Endothelial cell of umbilical vein (primary cell): ENCODE measurements at regions of chr12 and their contacts with region 1.

Region 1: DNA sequence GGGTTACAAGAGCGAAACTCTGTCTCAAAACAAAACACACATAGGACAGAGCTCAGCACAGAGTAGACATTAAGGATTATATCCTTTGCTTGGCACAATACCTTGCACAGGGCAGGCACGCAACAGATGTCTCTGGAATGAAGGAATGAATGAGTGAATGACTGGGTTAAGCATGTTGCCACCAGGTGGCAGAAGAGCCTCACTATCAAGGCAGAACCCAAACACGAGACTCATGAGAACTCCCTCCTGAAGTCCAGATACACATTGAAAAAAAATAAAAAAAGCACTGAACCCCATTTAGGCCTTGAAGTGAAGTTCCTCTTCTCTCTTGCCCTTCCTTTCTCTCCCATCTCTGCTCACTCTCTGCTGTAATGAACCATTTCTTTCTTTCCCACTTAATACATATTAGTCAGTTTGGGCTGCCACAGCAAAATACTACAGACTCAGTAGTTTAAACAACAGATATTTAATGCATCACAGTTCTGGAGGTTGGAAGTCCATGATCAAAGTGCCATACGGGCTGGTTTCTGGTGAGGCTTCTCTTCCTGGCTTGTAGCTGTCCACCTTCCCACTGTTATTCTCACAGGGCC is 26.6 kb upstream of the LTA4H start:
- DNase-seq: peak; percentile 90
- H3K4me3 ChIP-seq: no peak overlapping the region
- H3K27ac ChIP-seq: no peak overlapping the region
- H3K4me1 ChIP-seq: peaks cover 3% of the 10 kb centered on the region
- H3K27me3 ChIP-seq: no peaks in the 10 kb centered on the region
- CTCF ChIP-seq: peak; percentile 77 to 80
- POLR2A ChIP-seq: no peak

Region 2: GRCh38 chr12:95986635-95987570 is 75.1 kb before region 1 on chr12:
- CTCF ChIA-PET with region 1: no interaction called
- POLR2A ChIA-PET with region 1: no interaction called
- dilution Hi-C with region 1: no loop called
- intact Hi-C with region 1: no loop called
- DNase-seq: no peak
- H3K4me3 ChIP-seq: no peak overlapping the region
- H3K27ac ChIP-seq: no peak overlapping the region
- H3K4me1 ChIP-seq: no peaks in the 10 kb centered on the region
- H3K27me3 ChIP-seq: peaks cover 14 to 26% of the 10 kb centered on the region in 2 experiments
- CTCF ChIP-seq: no peak
- POLR2A ChIP-seq: no peak

Region 3: GRCh38 chr12:96164951-96165811 is 103.2 kb after region 1 on chr12:
- CTCF ChIA-PET with region 1: no interaction called
- POLR2A ChIA-PET with region 1: no interaction called
- dilution Hi-C with region 1: no loop called
- intact Hi-C with region 1: loop called (anchors 1 kb)
- DNase-seq: peak; percentile 98
- H3K4me3 ChIP-seq: no peak overlapping the region
- H3K27ac ChIP-seq: peak overlapping the region; percentile 81
- H3K4me1 ChIP-seq: peaks cover 45% of the 10 kb centered on the region
- H3K27me3 ChIP-seq: no peaks in the 10 kb centered on the region
- CTCF ChIP-seq: no peak
- POLR2A ChIP-seq: peak; percentile 50

Region 4: DNA sequence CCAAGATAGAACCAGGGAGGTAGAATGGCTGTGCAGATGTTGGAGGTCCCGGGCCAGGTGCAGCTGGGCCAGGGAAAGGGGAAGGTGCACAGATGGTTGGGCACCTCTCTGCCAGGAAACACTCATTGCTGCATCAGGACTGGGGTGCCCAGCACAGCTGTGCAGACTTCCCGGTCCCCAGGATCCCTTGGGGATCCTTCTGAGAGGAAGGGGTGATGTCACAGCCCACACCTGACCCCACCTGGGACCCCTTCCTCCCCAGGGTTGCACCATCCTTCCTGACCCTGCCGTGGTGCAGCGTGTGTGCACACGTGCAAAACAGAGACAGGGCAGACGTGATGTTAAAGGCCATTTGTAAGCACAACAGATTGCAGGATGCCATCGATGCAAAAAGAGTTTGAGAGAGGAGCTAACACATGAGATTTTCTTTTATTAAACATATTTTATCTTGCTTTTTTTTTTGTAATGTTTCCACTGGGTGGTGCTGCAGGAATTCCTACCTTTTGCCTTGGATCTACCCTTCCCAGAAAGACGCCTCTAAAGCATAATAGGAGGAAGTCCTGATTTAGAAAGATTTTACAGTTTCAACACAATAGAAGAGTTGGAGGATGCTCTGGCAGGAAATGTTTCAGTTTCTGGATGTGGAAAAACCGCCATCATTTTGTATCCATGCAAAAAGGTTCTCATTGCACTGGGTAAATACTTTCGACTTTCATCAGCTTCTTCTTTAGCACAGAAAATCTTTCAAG is 147.0 kb after region 1 on chr12:
- CTCF ChIA-PET with region 1: interaction called, 12 read pairs
- POLR2A ChIA-PET with region 1: no interaction called
- dilution Hi-C with region 1: no loop called
- intact Hi-C with region 1: no loop called
- DNase-seq: peak; percentile 91
- H3K4me3 ChIP-seq: no peak overlapping the region
- H3K27ac ChIP-seq: peak overlapping the region; percentile 82
- H3K4me1 ChIP-seq: peaks cover 100% of the 10 kb centered on the region
- H3K27me3 ChIP-seq: no peaks in the 10 kb centered on the region
- CTCF ChIP-seq: peak in 1 of 2 donors; percentile 18
- POLR2A ChIP-seq: no peak

Region 5: DNA sequence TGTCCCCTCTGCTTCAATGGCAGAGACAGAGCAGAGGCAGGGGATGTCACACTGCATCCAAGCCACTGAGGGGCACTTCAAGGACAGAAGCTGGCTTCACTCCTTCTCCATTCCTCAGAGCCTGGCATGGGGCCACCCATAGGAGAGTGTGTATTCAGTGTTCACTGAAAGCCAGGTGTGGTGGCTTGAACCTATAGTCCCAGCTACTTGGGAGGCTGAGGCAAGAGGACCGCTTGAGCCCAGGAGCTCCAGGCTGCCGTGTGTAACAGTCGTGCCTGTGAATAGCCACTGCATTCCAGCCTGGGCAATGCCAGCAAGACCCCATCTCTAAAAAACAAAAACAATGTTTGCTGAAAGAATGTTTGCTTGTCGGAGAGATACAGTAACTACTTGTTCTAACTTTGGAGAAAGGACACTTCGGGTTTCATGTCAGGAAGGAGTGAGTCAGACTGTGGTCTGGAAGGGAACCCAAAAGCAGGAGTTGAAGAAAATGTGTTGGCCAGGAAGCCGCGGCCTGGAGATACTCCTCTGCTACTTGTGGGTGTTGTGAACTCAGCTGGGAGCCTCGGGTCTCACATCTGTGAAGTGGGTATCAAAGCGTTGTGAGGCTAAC is 175.6 kb after region 1 on chr12:
- CTCF ChIA-PET with region 1: no interaction called
- POLR2A ChIA-PET with region 1: no interaction called
- dilution Hi-C with region 1: no loop called
- intact Hi-C with region 1: loop called (anchors 2 kb)
- DNase-seq: peak; percentile 96
- H3K4me3 ChIP-seq: no peak overlapping the region
- H3K27ac ChIP-seq: peak overlapping the region; percentile 86
- H3K4me1 ChIP-seq: peaks cover 94% of the 10 kb centered on the region
- H3K27me3 ChIP-seq: no peaks in the 10 kb centered on the region
- CTCF ChIP-seq: no peak
- POLR2A ChIP-seq: no peak

Region 6: DNA sequence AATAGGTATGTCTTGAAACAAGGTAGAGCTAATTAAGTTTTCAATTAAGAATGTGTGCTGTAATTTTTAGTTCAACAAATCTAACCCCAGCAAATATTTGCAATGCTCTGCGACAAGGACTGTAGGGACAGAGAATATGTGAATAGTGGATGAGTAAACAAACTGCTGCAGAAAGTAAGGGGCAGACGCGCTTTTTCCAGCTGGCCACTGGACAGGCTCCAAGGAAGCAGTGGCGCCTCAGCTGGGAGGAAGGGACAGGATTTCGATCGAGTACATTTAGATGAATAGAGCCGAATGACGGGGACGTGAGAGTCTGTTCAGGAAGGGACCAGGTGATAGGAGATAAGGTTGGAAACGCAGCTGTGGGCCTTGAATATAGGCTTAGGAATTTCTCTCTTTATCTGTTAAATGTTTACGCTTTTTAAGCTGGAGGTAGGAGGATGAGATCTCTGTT is 201.5 kb after region 1 on chr12:
- CTCF ChIA-PET with region 1: no interaction called
- POLR2A ChIA-PET with region 1: no interaction called
- dilution Hi-C with region 1: no loop called
- intact Hi-C with region 1: loop called (anchors 2 kb)
- DNase-seq: peak; percentile 88
- H3K4me3 ChIP-seq: no peak overlapping the region
- H3K27ac ChIP-seq: peak overlapping the region; percentile 60
- H3K4me1 ChIP-seq: peaks cover 49% of the 10 kb centered on the region
- H3K27me3 ChIP-seq: no peaks in the 10 kb centered on the region
- CTCF ChIP-seq: no peak
- POLR2A ChIP-seq: peak; percentile 67

Region 7: DNA sequence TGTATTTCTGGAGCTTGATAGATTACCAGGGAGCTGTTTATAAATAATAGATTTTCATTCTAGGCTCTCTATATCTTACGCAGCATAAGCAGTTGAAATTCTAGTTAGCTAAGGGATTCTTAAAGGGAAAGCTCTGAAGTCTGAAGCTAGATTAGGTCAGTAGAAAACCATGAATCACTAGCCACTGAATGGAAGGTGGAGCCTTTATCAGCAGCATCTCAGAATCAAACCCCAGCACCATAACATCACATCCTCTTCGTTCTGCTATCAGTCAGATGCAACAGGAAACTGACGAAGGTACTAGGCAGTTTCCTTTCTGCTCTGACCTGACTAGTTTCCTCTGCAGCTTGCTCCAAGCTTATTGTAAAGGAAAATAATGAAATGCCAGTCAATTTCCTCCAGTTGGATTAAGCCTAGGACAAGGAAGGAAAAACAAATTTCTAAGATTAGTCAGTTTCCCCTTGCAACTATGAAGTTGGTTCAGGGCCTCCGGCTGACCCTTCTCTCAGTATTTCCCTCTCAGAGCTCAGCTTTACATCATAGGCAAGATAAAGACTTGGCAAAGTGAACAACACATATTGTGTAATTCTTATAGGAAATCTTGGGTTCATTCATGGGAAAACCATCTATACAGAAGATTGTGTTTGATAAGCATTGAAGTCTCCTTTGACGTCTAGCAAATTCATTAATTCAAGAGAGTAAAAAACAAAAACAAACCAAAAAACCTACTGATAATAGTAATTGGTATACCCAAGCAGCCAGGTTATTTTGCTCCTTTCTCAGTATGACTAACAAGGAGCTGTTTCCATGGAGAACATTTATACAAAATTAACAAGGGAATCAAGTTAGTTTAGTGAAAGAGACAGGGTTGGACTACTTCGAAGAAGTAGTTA is 384.0 kb after region 1 on chr12:
- CTCF ChIA-PET with region 1: no interaction called
- POLR2A ChIA-PET with region 1: no interaction called
- dilution Hi-C with region 1: no loop called
- intact Hi-C with region 1: no loop called
- DNase-seq: peak; percentile 100
- H3K4me3 ChIP-seq: no peak overlapping the region
- H3K27ac ChIP-seq: peak overlapping the region; percentile 99
- H3K4me1 ChIP-seq: peaks cover 51% of the 10 kb centered on the region
- H3K27me3 ChIP-seq: no peaks in the 10 kb centered on the region
- CTCF ChIP-seq: no peak
- POLR2A ChIP-seq: peak; percentile 88

Region 8: GRCh38 chr12:96516472-96517430 is 454.8 kb after region 1 on chr12:
- CTCF ChIA-PET with region 1: interaction called, 3 read pairs
- POLR2A ChIA-PET with region 1: no interaction called
- dilution Hi-C with region 1: no loop called
- intact Hi-C with region 1: loop called (anchors 1 kb)
- DNase-seq: peak; percentile 94
- H3K4me3 ChIP-seq: no peak overlapping the region
- H3K27ac ChIP-seq: peak overlapping the region; percentile 69
- H3K4me1 ChIP-seq: peaks cover 16% of the 10 kb centered on the region
- H3K27me3 ChIP-seq: no peaks in the 10 kb centered on the region
- CTCF ChIP-seq: peak; percentile 29 to 35
- POLR2A ChIP-seq: no peak